ENCODE measurements at regions of chr14 and their contacts with region 1.

Region 1: GRCh38 chr14:58244556-58245387 is at the start of gene PSMA3:
- DNase-seq: peak; percentile 99
- H3K4me3 Mint-ChIP-seq: peak within 1 kb of the TSS; percentile 86
- H3K27ac Mint-ChIP-seq: peak within 1 kb of the TSS; percentile 90
- H3K4me1 Mint-ChIP-seq: peaks cover 42% of the 10 kb centered on the region
- H3K27me3 Mint-ChIP-seq: no peaks in the 10 kb centered on the region
- total RNA-seq, gene PSMA3: 349 to 355 TPM

Region 2: DNA sequence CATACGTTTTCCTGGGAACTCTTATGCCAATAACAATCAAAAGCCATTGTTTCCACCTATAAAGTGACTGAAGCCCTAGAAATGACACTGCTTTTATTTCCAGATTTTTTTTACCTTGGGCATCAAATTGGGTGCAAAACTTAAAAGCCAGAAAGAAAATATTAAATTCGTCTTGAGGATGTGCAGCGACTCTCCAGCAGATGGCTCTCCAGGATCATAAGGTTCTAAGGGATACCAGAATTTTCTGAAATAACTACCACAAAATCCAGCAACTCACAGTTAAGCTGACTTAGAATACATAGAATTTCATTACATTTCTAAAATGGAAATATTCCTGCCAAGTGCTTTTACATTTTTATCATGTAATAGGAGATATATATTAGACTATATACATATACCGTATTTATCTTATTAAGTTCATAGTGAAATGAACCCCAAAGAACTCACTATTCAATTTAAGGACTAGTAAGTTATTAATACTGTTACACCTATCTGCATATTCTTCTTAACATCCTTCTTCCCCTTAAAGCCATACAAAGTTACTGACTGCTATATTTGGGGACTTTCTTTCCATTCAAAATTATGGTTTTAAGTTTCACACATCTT is 136.7 kb before region 1 on chr14:
- CTCF ChIA-PET with region 1: no interaction called
- POLR2A ChIA-PET with region 1: no interaction called
- intact Hi-C with region 1: loop called (anchors 2 kb)
- DNase-seq: peak; percentile 49
- H3K4me3 Mint-ChIP-seq: no peak overlapping the region
- H3K27ac Mint-ChIP-seq: no peak overlapping the region
- H3K4me1 Mint-ChIP-seq: peaks cover 6% of the 10 kb centered on the region
- H3K27me3 Mint-ChIP-seq: peaks cover 9% of the 10 kb centered on the region

Region 3: DNA sequence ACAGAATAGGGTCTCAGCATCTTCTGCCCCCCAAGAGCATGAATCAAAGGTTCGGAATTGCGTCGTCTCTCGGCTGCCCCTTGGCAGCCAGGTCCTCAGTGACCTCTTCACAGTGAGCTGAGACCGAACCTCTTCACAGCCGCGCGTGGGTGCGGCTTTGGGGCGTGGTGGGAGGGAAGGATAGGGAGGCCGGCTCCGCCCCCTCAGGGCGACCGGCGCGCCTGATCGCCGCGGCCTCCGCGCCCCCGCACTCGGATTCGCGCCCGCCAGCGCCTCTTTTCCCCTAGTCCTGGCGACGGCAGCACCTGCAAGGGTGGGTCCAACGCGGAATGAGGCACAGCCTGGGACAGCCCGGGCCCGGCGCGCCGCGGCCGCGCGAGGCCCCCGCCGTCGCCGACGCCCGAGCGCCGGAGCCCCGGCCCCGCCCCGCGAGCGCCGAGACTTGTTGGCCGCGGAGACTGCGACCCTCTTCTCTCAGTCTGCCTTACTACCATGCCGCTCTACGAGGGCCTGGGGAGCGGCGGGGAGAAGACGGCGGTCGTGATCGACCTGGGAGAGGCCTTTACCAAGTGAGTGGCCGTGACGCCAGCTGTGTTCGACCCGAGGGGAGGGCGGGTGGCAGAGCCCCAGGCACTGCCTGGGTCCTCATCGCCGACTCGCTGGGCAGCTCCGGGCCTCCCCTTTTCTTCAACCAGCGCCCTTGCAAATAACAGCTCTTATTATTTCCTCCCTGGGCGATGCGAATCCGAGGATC is 44.9 kb before region 1 on chr14 and contains the start of gene ACTR10:
- CTCF ChIA-PET with region 1: interaction called, 3 read pairs
- POLR2A ChIA-PET with region 1: interaction called, 9 read pairs
- intact Hi-C with region 1: loop called (anchors 1 kb)
- DNase-seq: peak; percentile 93
- H3K4me3 Mint-ChIP-seq: peak within 1 kb of the TSS; percentile 95
- H3K27ac Mint-ChIP-seq: peak within 1 kb of the TSS; percentile 88
- H3K4me1 Mint-ChIP-seq: peaks cover 29% of the 10 kb centered on the region
- H3K27me3 Mint-ChIP-seq: no peaks in the 10 kb centered on the region
- total RNA-seq, gene ACTR10: 45.3 to 47.0 TPM

Region 4: DNA sequence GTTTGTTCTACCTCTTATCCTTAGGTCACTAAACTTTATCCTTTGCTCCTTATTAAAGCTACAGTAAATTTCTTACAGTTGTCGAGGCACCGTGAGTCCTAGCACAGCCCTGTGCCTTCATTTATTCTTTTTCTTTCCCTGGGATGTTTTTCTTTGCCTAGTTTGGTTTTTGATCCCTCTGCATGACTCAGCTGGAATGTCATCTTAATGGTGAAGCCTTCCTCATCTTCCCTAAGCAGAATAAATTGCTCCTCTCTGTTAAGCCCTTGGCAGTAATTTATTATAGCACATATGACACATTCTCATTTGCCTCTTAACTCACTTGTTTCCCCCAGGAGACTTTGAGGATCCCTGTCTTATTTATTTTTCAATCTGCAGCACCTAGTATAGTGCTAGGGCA is 28.2 kb before region 1 on chr14:
- CTCF ChIA-PET with region 1: no interaction called
- POLR2A ChIA-PET with region 1: no interaction called
- intact Hi-C with region 1: no loop called
- DNase-seq: no peak
- H3K4me3 Mint-ChIP-seq: no peak overlapping the region
- H3K27ac Mint-ChIP-seq: no peak overlapping the region
- H3K4me1 Mint-ChIP-seq: peaks cover 6% of the 10 kb centered on the region
- H3K27me3 Mint-ChIP-seq: no peaks in the 10 kb centered on the region

Region 5: GRCh38 chr14:58331111-58331510 is 86.3 kb after region 1 on chr14:
- CTCF ChIA-PET with region 1: no interaction called
- POLR2A ChIA-PET with region 1: no interaction called
- intact Hi-C with region 1: no loop called
- DNase-seq: peak; percentile 88
- H3K4me3 Mint-ChIP-seq: peak overlapping the region; percentile 62
- H3K27ac Mint-ChIP-seq: peak overlapping the region; percentile 89
- H3K4me1 Mint-ChIP-seq: peaks cover 13% of the 10 kb centered on the region
- H3K27me3 Mint-ChIP-seq: no peaks in the 10 kb centered on the region

Region 6: DNA sequence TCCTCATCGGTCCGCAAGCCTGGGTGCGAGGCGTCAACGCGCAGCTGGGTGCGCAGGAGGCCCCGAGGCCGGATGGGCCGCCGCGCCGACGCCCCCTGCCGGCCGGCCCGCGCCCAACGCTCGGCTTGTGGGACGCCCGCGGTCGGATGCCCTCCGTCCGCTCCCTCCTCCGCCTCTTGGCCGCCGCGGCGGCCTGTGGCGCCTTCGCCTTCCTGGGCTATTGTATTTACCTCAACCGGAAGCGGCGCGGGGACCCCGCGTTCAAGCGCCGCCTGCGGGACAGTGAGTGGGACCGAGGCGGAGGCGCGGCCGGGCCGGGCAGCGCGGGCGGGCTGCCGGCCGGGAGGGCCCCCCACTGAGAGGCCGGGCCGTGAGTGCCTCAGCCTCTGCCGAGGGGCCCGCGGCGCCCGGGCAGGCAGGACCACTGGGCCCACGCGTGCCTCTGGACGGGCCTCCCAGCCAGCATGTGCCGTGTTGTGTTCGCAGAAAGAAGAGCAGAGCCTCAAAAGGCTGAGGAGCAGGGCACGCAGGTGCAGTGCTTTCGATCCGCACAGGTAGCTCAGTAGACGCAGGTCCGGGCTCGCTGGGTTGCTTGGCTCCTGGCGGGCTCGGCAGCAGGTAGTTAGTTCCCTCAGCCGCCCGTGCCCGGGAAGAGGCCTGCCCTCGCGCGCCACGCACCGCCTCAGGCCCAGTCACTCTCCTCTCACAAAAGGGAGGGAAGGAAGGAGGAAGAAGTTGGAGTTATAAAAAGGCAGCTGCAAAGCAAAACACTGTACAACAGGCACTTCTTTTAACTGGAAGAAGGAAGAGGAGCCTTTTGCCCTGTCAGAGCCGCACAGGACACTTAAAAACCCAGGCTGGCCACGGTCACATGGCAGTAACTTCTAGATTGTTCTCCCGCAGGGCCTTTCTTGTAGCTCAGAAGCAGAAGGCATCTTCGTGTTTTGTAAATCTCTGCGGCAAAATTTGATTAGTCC is 151.3 kb after region 1 on chr14 and contains the start of gene TOMM20L:
- CTCF ChIA-PET with region 1: interaction called, 4 read pairs
- POLR2A ChIA-PET with region 1: no interaction called
- intact Hi-C with region 1: loop called (anchors 10 kb)
- DNase-seq: peak; percentile 80
- H3K4me3 Mint-ChIP-seq: peak within 1 kb of the TSS; percentile 66
- H3K27ac Mint-ChIP-seq: peak within 1 kb of the TSS; percentile 58
- H3K4me1 Mint-ChIP-seq: peaks cover 11% of the 10 kb centered on the region
- H3K27me3 Mint-ChIP-seq: no peaks in the 10 kb centered on the region
- total RNA-seq, gene TOMM20L: not detected

Measured in activated CD4-positive, alpha-beta memory T cell treated with anti-CD3 and anti-CD28 coated beads for 36 hours (primary cell).